SK-N-SH (cell line): ENCODE measurements at regions of chr3 and their contacts with region 1.

Region 1: DNA sequence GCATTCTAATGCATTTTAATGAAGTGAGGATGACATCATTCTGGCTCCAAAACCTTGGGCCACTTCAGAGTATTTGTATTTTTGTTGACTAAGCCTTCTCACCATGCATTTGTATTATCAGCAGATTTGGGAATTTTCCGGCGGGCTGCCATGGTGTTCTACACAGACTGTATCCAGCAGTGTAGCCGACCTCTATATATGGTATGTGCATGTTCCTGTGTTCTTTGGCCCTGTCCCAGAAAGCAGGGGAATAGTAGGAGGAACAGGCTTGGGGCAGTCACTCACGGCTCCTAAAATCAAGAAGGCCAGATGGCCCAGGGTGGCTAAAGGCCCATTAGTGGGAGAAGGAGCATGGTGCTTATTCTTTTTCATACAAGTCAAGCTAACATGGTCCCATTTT is 80.5 kb downstream of the USF3 start:
- DNase-seq: no peak
- H3K4me3 ChIP-seq: no peak overlapping the region
- H3K27ac ChIP-seq: no peak overlapping the region
- H3K4me1 ChIP-seq: no peaks in the 10 kb centered on the region
- H3K27me3 ChIP-seq: no peaks in the 10 kb centered on the region; the same call in 1 of the 2 replicates
- CTCF ChIP-seq: no peak
- EP300 ChIP-seq: no peak
- RAD21 ChIP-seq: no peak

Region 2: DNA sequence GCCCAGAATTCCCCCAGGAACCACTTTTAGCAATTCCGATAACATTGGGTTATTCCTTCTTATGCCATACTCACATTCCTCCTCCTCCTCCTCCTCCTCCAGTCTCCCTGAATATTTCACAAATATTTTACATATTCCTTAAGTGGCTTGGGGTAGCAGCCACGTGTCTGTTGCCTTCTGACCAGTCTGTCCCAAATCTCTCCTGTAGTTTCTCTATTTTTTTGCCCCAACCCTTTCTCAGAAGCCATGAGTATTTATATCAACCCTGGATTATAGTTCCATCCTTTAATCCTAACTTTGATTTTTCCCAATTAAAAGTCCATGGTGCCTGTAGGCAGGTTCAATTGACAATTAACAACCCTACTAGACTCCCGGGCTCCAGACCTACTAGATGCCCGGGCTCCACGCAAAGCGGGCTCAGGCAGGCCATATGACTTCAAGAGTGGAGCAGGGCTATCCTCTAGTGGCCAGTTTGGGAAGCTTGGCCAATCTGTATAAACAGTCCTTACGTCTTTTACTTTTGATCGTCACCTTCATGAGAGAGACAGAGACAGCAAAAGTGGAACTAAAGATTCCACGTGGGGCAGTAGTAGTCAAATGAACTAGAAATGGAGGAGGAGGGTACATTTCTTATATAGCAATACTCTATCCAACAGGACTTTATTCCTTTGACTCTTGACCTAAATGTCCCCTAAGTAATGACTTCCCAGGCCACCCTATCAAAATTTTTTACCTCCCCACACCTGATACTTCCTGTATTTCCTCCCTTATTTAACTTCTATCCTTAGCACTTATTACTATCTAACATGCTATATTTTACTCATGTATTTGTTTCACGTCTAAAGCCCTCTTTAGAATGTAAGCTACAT is 10.8 kb after region 1 on chr3:
- CTCF ChIA-PET with region 1: interaction called, 18 read pairs
- POLR2A ChIA-PET with region 1: no interaction called
- DNase-seq: peak; percentile 73
- H3K4me3 ChIP-seq: no peak overlapping the region
- H3K27ac ChIP-seq: no peak overlapping the region
- H3K4me1 ChIP-seq: no peaks in the 10 kb centered on the region
- H3K27me3 ChIP-seq: no peaks in the 10 kb centered on the region
- CTCF ChIP-seq: peak; percentile 77
- EP300 ChIP-seq: no peak
- RAD21 ChIP-seq: peak; percentile 89

Region 3: DNA sequence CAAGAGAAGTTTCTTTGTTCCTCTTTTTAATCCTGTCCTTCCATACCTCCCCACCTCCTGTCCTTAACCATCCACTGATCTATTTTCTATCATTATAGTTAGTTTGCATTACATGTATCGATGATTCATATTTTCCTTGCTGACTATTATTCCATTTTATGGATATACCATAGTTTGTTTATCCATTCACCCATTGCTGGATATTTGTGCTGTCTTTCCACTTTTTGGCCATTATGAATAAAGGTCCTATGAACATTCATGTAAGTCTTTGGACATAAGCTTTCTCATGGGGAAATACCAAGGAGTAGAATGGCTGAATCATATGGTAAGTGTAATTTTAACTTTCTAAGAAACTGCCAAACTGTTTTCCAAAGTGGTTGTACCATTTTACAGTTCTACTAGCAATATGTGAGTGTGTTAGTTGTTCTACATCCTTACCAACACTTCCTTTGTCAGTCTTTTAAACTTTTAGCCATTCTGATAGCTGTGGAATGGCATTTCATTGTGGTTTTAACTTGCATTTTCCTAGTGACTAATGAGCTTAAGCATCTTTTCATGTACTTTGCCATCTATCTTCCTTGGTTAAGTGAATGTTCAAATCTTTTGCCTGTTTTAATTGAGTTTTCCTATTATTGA is 142.5 kb after region 1 on chr3:
- CTCF ChIA-PET with region 1: no interaction called
- POLR2A ChIA-PET with region 1: no interaction called
- DNase-seq: no peak
- H3K4me3 ChIP-seq: no peak overlapping the region
- H3K27ac ChIP-seq: no peak overlapping the region
- H3K4me1 ChIP-seq: no peaks in the 10 kb centered on the region
- H3K27me3 ChIP-seq: no peaks in the 10 kb centered on the region
- CTCF ChIP-seq: no peak
- EP300 ChIP-seq: no peak
- RAD21 ChIP-seq: no peak